ENCODE measurements at regions of chr18 and their contacts with region 1.

Region 1: GRCh38 chr18:36095936-36096519 is 28.7 kb upstream of the RPRD1A start:
- DNase-seq: peak; percentile 53
- ATAC-seq: no peak
- H3K4me3 ChIP-seq: no peak overlapping the region
- H3K27ac ChIP-seq: no peak overlapping the region
- H3K4me1 ChIP-seq: peaks cover 6% of the 10 kb centered on the region; the same call in 1 of the 2 replicates
- H3K27me3 ChIP-seq: 0 out of 5 replicates have a peak, but pooled peaks cover 0 to 4% of the 10 kb centered on the region in 2 experiments
- CTCF ChIP-seq: peak; percentile 75
- EP300 ChIP-seq: no peak
- POLR2A ChIP-seq: no peak
- RAD21 ChIP-seq: peak; percentile 53

Region 2: GRCh38 chr18:36015629-36016028 is 80.4 kb before region 1 on chr18:
- CTCF ChIA-PET with region 1: interaction called, 9 read pairs
- POLR2A ChIA-PET with region 1: no interaction called
- in situ Hi-C with region 1: no loop called
- intact Hi-C with region 1: loop called (anchors 1 kb)
- DNase-seq: no peak
- ATAC-seq: no peak
- H3K4me3 ChIP-seq: no peak overlapping the region
- H3K27ac ChIP-seq: no peak overlapping the region
- H3K4me1 ChIP-seq: no peaks in the 10 kb centered on the region
- H3K27me3 ChIP-seq: no peaks in the 10 kb centered on the region
- CTCF ChIP-seq: no peak
- EP300 ChIP-seq: no peak
- POLR2A ChIP-seq: no peak
- RAD21 ChIP-seq: no peak

Region 3: GRCh38 chr18:36284671-36285295 is 188.8 kb after region 1 on chr18:
- CTCF ChIA-PET with region 1: interaction called, 79 read pairs
- POLR2A ChIA-PET with region 1: interaction called, 3 read pairs
- in situ Hi-C with region 1: loop called (anchors 5 kb)
- intact Hi-C with region 1: loop called (anchors 1 kb)
- DNase-seq: peak; percentile 62
- ATAC-seq: peak; percentile 53
- H3K4me3 ChIP-seq: no peak overlapping the region
- H3K27ac ChIP-seq: no peak overlapping the region
- H3K4me1 ChIP-seq: 0 out of 2 replicates have a peak, but pooled peaks cover 7% of the 10 kb centered on the region
- H3K27me3 ChIP-seq: no peaks in the 10 kb centered on the region
- CTCF ChIP-seq: peak; percentile 86
- EP300 ChIP-seq: no peak
- POLR2A ChIP-seq: no peak
- RAD21 ChIP-seq: peak; percentile 81

Region 4: GRCh38 chr18:36411745-36412168 is 315.7 kb after region 1 on chr18:
- CTCF ChIA-PET with region 1: interaction called, 3 read pairs
- POLR2A ChIA-PET with region 1: no interaction called
- in situ Hi-C with region 1: loop called (anchors 10 kb)
- intact Hi-C with region 1: loop called (anchors 2 kb)
- DNase-seq: peak; percentile 21
- ATAC-seq: peak; percentile 77
- H3K4me3 ChIP-seq: no peak overlapping the region
- H3K27ac ChIP-seq: no peak overlapping the region
- H3K4me1 ChIP-seq: no peaks in the 10 kb centered on the region
- H3K27me3 ChIP-seq: no peaks in the 10 kb centered on the region
- CTCF ChIP-seq: peak; percentile 27
- EP300 ChIP-seq: no peak
- POLR2A ChIP-seq: no peak
- RAD21 ChIP-seq: no peak

Region 5: DNA sequence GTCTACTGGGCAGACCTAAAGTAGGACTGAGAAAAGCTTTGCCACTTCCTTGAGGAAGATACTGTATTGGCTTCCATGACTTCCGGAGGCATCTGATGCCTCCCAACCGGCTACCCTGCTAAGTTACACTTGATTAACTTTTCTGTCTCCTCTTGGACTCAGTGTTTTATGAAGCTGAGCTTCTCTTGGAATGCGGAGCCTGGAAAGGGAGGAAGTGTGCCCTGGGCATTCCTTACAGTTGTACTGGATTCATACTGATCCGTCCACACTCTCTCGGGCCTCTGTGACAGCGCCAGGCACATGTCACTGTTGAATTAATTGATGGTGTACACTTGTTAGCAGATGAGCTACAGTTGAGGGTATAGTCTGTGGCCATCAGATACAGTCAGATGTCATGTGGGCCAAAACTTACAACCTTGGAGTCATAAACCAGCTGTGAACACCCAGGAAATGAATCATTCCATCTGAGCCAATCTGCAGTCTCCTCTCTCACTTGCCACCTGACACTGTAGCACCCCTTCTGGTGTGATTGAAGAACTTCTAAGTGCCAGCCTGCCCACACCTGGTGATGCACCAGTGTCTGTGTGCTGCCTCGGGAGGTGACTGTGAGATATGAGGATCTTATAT is 324.0 kb after region 1 on chr18:
- CTCF ChIA-PET with region 1: no interaction called
- POLR2A ChIA-PET with region 1: no interaction called
- in situ Hi-C with region 1: loop called (anchors 10 kb)
- intact Hi-C with region 1: no loop called
- DNase-seq: peak; percentile 5
- ATAC-seq: peak; percentile 63
- H3K4me3 ChIP-seq: no peak overlapping the region
- H3K27ac ChIP-seq: no peak overlapping the region
- H3K4me1 ChIP-seq: no peaks in the 10 kb centered on the region
- H3K27me3 ChIP-seq: peaks cover 0 to 3% of the 10 kb centered on the region in 2 experiments; a peak in 3 of 5 replicates
- CTCF ChIP-seq: no peak
- EP300 ChIP-seq: no peak
- POLR2A ChIP-seq: no peak
- RAD21 ChIP-seq: no peak

Region 6: GRCh38 chr18:36572135-36572856 is 476.3 kb after region 1 on chr18:
- CTCF ChIA-PET with region 1: interaction called, 4 read pairs
- POLR2A ChIA-PET with region 1: no interaction called
- in situ Hi-C with region 1: loop called (anchors 10 kb)
- intact Hi-C with region 1: no loop called
- DNase-seq: peak; percentile 19
- ATAC-seq: peak; percentile 83
- H3K4me3 ChIP-seq: no peak overlapping the region
- H3K27ac ChIP-seq: no peak overlapping the region
- H3K4me1 ChIP-seq: no peaks in the 10 kb centered on the region
- H3K27me3 ChIP-seq: peaks cover 0 to 3% of the 10 kb centered on the region in 2 experiments; a peak in 2 of 5 replicates
- CTCF ChIP-seq: peak; percentile 70
- EP300 ChIP-seq: no peak
- POLR2A ChIP-seq: no peak
- RAD21 ChIP-seq: 0 out of 2 replicates have a peak, but pooled peaks have one; percentile 38

Region 7: DNA sequence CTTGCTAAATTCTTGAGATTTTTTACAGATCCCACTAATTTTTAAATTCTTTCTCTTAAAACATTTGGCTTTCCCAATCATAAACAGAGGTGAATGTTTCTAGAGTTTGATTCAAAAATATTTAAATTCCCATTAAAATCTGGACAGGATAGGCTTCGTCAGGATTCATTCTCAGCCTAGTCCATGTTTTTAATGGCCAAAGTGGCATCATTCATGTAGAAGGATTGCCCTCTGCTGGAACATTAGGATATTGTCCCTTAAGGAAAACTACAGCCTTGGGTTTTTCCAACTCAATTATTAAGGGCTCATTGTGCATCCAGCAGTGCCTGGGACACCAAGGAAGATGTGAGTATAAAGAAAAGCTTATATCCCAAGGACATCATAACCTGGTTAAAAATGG is 661.1 kb after region 1 on chr18:
- CTCF ChIA-PET with region 1: no interaction called
- POLR2A ChIA-PET with region 1: no interaction called
- in situ Hi-C with region 1: no loop called
- intact Hi-C with region 1: loop called (anchors 5 kb)
- DNase-seq: peak; percentile 48
- ATAC-seq: peak; percentile 71
- H3K4me3 ChIP-seq: no peak overlapping the region
- H3K27ac ChIP-seq: no peak overlapping the region
- H3K4me1 ChIP-seq: 0 out of 2 replicates have a peak, but pooled peaks cover 6% of the 10 kb centered on the region
- H3K27me3 ChIP-seq: no peaks in the 10 kb centered on the region
- CTCF ChIP-seq: peak; percentile 72
- EP300 ChIP-seq: no peak
- POLR2A ChIP-seq: no peak
- RAD21 ChIP-seq: peak; percentile 32; the same call in 1 of the 2 replicates

Measured in HepG2 (cell line).